Lower leg skin (tissue), 4 donors: ENCODE measurements at regions of chr2 and their contacts with region 1.

Region 1: DNA sequence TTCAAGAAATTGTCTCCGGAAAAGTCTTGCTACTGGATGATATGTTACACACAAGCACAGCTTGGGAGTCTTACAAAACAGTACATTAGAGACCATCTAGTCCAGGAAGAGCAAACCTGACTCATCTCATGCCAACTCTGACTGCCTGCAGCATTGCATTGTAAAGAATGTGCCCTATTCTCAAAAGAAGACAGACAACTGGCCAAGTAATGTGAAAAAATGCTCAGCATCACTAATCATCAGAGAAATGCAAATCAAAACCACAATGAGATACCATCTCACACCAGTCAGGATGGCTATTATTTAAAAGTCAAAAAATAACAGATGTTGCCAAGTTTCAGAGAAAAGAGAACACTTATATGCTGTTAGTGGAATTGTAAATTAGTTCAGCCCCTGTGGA is 42.7 kb upstream of the GORASP2 start:
- DNase-seq: no peak
- H3K4me3 ChIP-seq: no peak overlapping the region
- CTCF ChIP-seq: no peak
- POLR2A ChIP-seq: no peak

Region 2: GRCh38 chr2:169641464-169641863 is 1244.9 kb before region 1 on chr2:
- intact Hi-C with region 1: loop called (anchors 10 kb)
- DNase-seq: no peak
- H3K4me3 ChIP-seq: no peak overlapping the region
- CTCF ChIP-seq: no peak
- POLR2A ChIP-seq: no peak

Region 3: GRCh38 chr2:171160119-171160955 is 274.0 kb after region 1 on chr2 and contains the start of gene TLK1:
- intact Hi-C with region 1: no loop called
- DNase-seq: peak; percentile 47 to 93
- H3K4me3 ChIP-seq: peak within 1 kb of the TSS; percentile 95
- CTCF ChIP-seq: no peak
- POLR2A ChIP-seq: no peak
- total RNA-seq, gene TLK1: 22.9 to 68.3 (median 26.2) TPM